Panc1 (cell line): ENCODE measurements at regions of chr16 and their contacts with region 1.

Region 1: DNA sequence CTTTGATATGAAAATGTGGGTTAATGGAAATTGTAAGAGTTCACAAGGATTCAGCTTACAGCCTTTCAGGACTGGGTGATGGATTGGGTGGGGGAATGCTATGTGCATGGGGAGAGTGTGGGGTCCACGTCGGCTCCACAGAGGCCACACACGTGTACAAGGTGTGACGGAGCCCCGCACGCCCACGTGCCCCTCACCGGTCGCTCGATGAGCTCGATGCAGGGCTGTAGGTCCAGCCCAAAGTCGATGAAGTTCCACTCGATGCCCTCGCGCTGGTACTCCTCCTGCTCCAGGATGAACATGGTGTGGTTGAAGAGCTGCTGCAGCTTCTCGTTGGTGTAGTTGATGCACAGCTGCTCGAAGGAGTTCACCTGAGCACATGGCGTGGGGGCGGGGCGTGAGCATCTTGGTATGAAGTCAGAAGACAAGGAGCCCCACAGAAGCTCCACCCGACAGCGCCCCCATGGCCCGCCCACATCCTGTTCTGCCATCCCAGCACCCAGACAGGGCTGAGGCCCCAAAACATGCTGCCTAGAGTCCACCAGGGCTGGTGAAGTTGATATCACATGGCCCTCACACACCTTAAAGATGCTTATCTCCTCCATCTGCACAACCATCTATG is 99.1 kb downstream of the MYH11 start:
- DNase-seq: no peak
- ATAC-seq: no peak
- H3K4me3 ChIP-seq: no peak overlapping the region
- H3K27ac ChIP-seq: no peak overlapping the region
- H3K4me1 ChIP-seq: no peaks in the 10 kb centered on the region
- H3K27me3 ChIP-seq: no peaks in the 10 kb centered on the region
- CTCF ChIP-seq: no peak

Region 2: GRCh38 chr16:15539197-15539596 is 218.5 kb before region 1 on chr16:
- CTCF ChIA-PET with region 1: no interaction called
- POLR2A ChIA-PET with region 1: no interaction called
- in situ Hi-C with region 1: no loop called
- intact Hi-C with region 1: no loop called
- DNase-seq: no peak
- ATAC-seq: peak; percentile 28; the same call in 1 of the 2 replicates
- H3K4me3 ChIP-seq: no peak overlapping the region
- H3K27ac ChIP-seq: no peak overlapping the region
- H3K4me1 ChIP-seq: no peaks in the 10 kb centered on the region
- H3K27me3 ChIP-seq: no peaks in the 10 kb centered on the region
- CTCF ChIP-seq: no peak

Region 3: GRCh38 chr16:15742716-15743115 is 15.0 kb before region 1 on chr16:
- CTCF ChIA-PET with region 1: interaction called, 16 read pairs
- POLR2A ChIA-PET with region 1: no interaction called
- in situ Hi-C with region 1: no loop called
- intact Hi-C with region 1: no loop called
- DNase-seq: no peak
- ATAC-seq: no peak
- H3K4me3 ChIP-seq: no peak overlapping the region
- H3K27ac ChIP-seq: no peak overlapping the region
- H3K4me1 ChIP-seq: no peaks in the 10 kb centered on the region
- H3K27me3 ChIP-seq: no peaks in the 10 kb centered on the region
- CTCF ChIP-seq: no peak

Region 4: DNA sequence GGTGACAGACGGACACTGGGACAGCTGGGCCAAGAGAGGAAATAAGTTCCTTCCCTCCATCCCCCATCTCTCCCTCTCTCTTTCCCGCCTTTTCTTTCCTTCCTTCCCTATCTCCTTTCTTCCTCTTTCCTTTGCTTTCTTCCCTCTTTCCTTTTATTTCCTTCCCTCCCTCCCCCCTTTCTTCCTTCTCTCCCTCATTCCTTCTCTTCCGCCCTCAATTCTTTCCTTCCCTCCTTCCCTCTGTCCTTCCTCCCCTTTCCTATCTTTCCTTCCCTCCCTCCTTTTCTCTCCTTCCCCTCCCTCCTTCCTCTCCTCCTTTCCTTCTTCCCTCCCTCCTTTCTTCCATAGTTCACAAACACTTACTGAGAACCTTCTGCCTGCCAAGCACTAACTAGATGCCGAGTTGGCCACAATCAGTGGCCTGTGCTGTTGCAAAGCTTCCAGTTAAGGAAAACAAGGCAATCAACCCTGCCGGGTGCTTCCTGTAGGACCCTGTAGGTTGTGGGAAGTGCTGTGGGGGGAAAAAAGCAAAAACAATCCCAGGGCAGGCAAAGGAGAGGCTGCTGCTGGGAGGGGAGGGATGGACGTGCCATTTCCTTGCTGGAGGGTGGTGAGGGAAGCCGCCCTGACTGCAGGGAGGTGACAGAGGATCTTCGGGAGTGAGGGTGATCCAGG is 433.9 kb after region 1 on chr16:
- CTCF ChIA-PET with region 1: interaction called, 13 read pairs
- POLR2A ChIA-PET with region 1: no interaction called
- in situ Hi-C with region 1: no loop called
- intact Hi-C with region 1: no loop called
- DNase-seq: no peak
- ATAC-seq: no peak
- H3K4me3 ChIP-seq: no peak overlapping the region
- H3K27ac ChIP-seq: no peak overlapping the region
- H3K4me1 ChIP-seq: no peaks in the 10 kb centered on the region
- H3K27me3 ChIP-seq: no peaks in the 10 kb centered on the region
- CTCF ChIP-seq: no peak